Heart right ventricle (tissue), 16 donors: ENCODE measurements at regions of chr17 and their contacts with region 1.

Region 1: DNA sequence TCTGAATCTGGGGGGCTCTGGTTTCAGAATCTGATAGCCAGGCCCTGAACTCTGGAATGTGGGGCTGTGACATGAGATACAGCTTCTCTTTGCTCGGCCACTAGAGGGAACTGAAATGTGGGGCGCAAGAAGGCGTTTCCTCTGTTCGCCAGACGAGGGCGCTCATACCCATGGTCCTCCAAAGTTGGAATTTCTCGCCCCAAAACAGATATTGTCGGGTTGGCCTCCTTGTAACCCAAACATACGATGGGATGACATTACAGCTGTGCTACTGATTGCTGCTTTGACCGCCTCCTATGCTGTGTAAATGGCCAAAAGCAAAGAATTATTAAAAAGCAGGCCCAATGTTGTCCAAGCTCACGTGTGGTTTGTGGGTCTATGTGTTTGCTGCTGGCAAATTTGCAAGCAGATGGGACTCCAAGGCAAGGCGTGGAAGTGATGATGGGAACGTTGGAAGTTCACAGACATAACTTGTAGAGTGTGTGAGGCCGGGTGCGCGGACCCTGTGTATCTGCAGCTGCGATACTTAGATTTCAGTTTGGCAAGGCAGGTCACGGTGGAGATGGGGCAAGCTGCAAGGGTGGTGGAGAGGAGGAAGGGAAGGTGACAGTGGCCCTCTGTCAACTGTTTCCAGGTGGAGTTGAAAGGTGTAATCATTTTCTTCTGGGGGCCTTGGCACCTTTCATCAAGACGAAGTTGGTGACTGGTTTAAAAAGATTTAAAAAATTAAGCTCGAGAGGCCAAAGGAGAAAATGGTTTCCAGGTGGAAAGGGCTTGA is 13.0 kb upstream of the MSI2 start:
- DNase-seq: peak; percentile 63 to 67
- ATAC-seq: peak; percentile 37 to 86 (median 72)
- H3K4me3 ChIP-seq: no peak overlapping the region
- H3K27ac ChIP-seq: peak overlapping the region in 4 of 10 donors; percentile 19 to 37 (median 27)
- H3K4me1 ChIP-seq: peaks cover 0 to 17% (median 13%) of the 10 kb centered on the region in 9 donors
- H3K27me3 ChIP-seq: no peaks in the 10 kb centered on the region
- CTCF ChIP-seq: peak; percentile 97 to 99 (median 98)

Region 2: GRCh38 chr17:57440522-57441485 is 197.4 kb after region 1 on chr17:
- intact Hi-C with region 1: loop called in 4 of 10 experiments (anchors 5 to 10 kb)
- DNase-seq: peak; percentile 72 to 88
- ATAC-seq: peak; percentile 78 to 89 (median 84)
- H3K4me3 ChIP-seq: no peak overlapping the region
- H3K27ac ChIP-seq: peak overlapping the region; percentile 42 to 83 (median 67)
- H3K4me1 ChIP-seq: peaks cover 23 to 91% (median 61%) of the 10 kb centered on the region in 9 donors
- H3K27me3 ChIP-seq: no peaks in the 10 kb centered on the region
- CTCF ChIP-seq: peak in 8 of 9 donors; percentile 30 to 79 (median 64)

Region 3: DNA sequence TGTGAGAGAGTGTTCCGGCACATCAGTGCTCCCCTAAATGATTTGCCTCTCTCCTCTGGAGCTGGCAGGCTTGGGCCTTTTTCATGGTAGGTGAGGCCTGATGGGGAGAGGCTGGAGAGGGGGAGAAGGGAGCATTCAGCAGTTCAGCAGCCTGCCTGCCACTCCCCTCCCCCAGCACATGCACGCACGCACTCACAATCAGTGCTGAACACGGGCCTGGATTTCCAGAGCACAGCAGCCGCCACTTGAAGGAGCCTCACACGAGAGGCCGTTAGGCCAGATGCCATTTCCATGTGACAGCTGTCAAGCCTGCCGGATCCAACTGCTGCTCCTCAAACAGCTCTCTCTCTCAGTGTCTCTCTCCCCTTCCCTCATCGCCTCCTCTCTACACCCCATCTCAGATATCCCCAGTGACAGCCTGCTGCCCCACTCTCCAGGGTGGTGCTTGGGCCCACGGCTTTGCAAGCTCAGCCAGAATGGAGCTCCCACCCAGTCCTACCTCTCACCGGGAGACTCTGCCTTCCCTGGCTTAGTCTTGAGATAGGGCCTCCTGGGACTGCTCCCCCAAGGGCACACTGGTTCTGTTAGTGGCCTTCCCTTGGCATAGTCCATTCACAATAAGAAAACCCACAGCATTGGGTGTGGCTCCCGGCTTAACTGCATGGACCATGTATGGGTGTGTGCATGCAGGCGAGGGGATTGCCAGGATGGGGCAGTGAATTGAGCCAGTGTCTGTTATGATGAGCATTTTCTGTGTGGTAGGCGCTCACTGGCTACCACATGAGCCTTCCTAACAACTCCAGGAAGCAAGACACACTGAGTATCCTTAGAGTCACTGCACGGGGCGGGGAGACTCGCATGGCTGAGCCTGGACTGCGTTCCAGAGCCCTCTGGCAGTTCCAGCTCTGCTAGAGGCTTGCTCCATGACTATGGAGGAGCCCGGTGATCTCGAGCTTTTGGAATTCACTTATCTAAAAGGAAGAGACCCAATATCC is 275.5 kb after region 1 on chr17:
- intact Hi-C with region 1: loop called in 3 of 10 experiments (anchors 10 kb)
- DNase-seq: peak; percentile 57 to 59
- ATAC-seq: peak; percentile 69 to 89 (median 83)
- H3K4me3 ChIP-seq: no peak overlapping the region
- H3K27ac ChIP-seq: peak overlapping the region in 5 of 10 donors; percentile 10 to 71 (median 45)
- H3K4me1 ChIP-seq: peaks cover 10 to 56% (median 33%) of the 10 kb centered on the region in 9 donors
- H3K27me3 ChIP-seq: no peaks in the 10 kb centered on the region
- CTCF ChIP-seq: no peak

Region 4: GRCh38 chr17:57535249-57535966 is 292.0 kb after region 1 on chr17:
- intact Hi-C with region 1: loop called in 1 of 10 experiments (anchors 10 kb)
- DNase-seq: no peak
- ATAC-seq: peak in 5 of 8 donors; percentile 12 to 42 (median 30)
- H3K4me3 ChIP-seq: no peak overlapping the region
- H3K27ac ChIP-seq: no peak overlapping the region
- H3K4me1 ChIP-seq: peaks cover 11 to 46% (median 27%) of the 10 kb centered on the region in 9 donors
- H3K27me3 ChIP-seq: no peaks in the 10 kb centered on the region
- CTCF ChIP-seq: no peak

Region 5: DNA sequence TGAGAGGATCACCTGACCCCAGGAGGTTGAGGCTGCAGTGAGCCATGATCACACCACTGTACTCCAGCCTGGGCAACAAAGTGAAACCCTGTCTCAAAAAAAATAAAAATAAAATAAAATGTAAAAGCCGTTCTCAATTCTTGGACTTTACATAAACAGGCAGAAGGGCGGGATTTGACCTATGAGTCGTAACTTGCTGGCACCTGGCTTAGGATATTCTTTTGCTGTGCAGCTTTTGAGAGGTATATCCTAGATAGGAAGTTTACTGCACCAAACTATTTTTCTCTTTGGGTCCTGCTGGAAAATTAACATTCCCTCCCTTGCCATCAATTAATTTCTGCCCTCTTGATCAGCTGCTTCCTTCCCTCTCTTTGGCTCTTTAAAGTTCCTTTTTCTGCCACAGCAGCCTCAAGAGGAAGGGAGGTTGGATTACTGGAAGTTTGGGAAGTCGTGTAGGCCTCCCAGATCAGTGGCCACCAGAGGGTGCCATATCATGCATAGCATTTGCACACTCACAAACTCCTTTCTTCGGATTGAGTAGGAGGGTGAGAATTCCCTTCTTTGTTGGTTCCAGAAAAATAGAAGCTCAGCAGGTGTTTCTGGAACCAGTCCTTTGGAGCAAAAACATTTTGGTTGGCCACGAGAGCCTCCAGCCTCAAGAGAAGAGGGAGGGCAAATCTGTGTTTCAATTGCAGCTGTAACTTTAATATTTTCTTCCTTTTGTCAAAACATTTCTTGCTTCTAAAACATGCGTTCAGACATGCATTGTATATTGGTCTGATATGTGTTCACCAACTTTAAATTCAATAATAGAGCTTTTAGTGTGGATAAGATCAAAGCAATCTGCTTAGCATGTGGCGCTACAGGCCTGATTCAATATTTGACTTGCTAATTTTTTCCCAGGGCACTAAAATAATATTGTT is 354.4 kb after region 1 on chr17:
- intact Hi-C with region 1: loop called in 2 of 10 experiments (anchors 10 kb)
- DNase-seq: peak; percentile 57 to 81
- ATAC-seq: peak in 7 of 8 donors; percentile 39 to 80 (median 71)
- H3K4me3 ChIP-seq: no peak overlapping the region
- H3K27ac ChIP-seq: peak overlapping the region in 8 of 10 donors; percentile 5 to 65 (median 58)
- H3K4me1 ChIP-seq: peaks cover 0 to 57% (median 34%) of the 10 kb centered on the region in 9 donors
- H3K27me3 ChIP-seq: no peaks in the 10 kb centered on the region
- CTCF ChIP-seq: peak; percentile 67 to 93 (median 85)